ENCODE measurements at regions of chr6 and their contacts with region 1.

Region 1: GRCh38 chr6:25369433-25370181 is 90.4 kb downstream of the CARMIL1 start:
- DNase-seq: peak; percentile 7
- H3K4me3 Mint-ChIP-seq: peak overlapping the region; percentile 62
- H3K27ac Mint-ChIP-seq: peak overlapping the region; percentile 91
- H3K4me1 Mint-ChIP-seq: peaks cover 73% of the 10 kb centered on the region
- H3K27me3 Mint-ChIP-seq: no peaks in the 10 kb centered on the region

Region 2: GRCh38 chr6:25042036-25042521 is 327.5 kb before region 1 on chr6:
- intact Hi-C with region 1: loop called (anchors 5 kb)
- DNase-seq: peak; percentile 30
- H3K4me3 Mint-ChIP-seq: peak overlapping the region; percentile 88
- H3K27ac Mint-ChIP-seq: peak overlapping the region; percentile 95
- H3K4me1 Mint-ChIP-seq: peaks cover 66% of the 10 kb centered on the region
- H3K27me3 Mint-ChIP-seq: no peaks in the 10 kb centered on the region

Region 3: GRCh38 chr6:25179051-25179778 is 190.4 kb before region 1 on chr6:
- intact Hi-C with region 1: loop called (anchors 2 kb)
- DNase-seq: no peak
- H3K4me3 Mint-ChIP-seq: peak overlapping the region; percentile 70
- H3K27ac Mint-ChIP-seq: peak overlapping the region; percentile 93
- H3K4me1 Mint-ChIP-seq: peaks cover 90% of the 10 kb centered on the region
- H3K27me3 Mint-ChIP-seq: no peaks in the 10 kb centered on the region

Region 4: DNA sequence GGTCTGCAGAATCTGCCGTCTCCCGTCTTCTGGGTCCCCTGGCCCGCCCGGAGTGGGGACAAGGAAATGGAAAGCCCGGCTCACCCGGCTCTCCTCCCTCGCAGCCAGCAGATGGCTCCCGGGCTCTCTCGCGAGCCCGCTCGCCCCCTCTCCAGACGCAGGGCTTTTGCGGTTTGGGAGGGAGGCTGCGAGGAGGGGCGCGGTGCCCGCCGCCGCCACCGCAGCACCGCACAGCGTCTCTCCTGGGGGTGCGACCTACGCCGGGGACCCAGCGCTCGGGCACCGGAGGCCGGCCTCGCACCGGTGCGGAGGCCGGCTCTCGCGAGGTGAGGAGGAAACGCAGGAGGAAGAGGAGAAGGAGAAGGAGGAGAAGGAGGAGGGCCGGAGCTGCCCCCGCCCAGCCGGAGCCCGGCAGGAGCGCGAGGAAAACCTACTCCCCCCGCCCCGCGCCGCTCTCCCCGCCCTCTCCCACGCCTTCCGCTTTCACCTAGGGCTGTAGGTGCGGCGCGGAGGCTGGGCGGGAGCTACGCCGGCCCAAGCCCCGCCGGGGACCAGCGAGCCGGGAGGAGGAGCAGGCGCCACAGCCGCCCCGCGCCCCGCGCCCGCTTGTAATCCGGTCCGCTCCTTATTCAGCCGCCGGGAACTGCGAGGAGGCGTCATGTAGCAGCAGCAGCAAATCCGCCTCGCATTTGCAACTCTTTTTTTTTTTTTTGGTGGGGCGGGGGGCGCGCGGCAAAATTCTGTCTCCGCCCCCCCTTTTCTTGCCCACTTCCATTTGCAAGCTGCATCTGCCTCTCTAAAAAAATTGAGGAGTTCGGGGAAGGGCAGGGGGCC is 90.5 kb before region 1 on chr6 and contains the start of gene CARMIL1:
- intact Hi-C with region 1: loop called (anchors 1 kb)
- DNase-seq: peak; percentile 67
- H3K4me3 Mint-ChIP-seq: peak within 1 kb of the TSS; percentile 88
- H3K27ac Mint-ChIP-seq: peak within 1 kb of the TSS; percentile 79
- H3K4me1 Mint-ChIP-seq: peaks cover 30% of the 10 kb centered on the region
- H3K27me3 Mint-ChIP-seq: peaks cover 12% of the 10 kb centered on the region
- total RNA-seq, gene CARMIL1: 1.7 and 1.9 TPM in 2 replicates

Region 5: GRCh38 chr6:25404693-25405169 is 35.1 kb after region 1 on chr6:
- intact Hi-C with region 1: loop called (anchors 2 kb)
- DNase-seq: peak; percentile 3
- H3K4me3 Mint-ChIP-seq: peak overlapping the region; percentile 72
- H3K27ac Mint-ChIP-seq: peak overlapping the region; percentile 91
- H3K4me1 Mint-ChIP-seq: no peaks in the 10 kb centered on the region
- H3K27me3 Mint-ChIP-seq: peaks cover 2% of the 10 kb centered on the region

Region 6: GRCh38 chr6:25417046-25417605 is 47.5 kb after region 1 on chr6:
- intact Hi-C with region 1: no loop called
- DNase-seq: no peak
- H3K4me3 Mint-ChIP-seq: no peak overlapping the region
- H3K27ac Mint-ChIP-seq: no peak overlapping the region
- H3K4me1 Mint-ChIP-seq: peaks cover 16% of the 10 kb centered on the region
- H3K27me3 Mint-ChIP-seq: no peaks in the 10 kb centered on the region

Region 7: DNA sequence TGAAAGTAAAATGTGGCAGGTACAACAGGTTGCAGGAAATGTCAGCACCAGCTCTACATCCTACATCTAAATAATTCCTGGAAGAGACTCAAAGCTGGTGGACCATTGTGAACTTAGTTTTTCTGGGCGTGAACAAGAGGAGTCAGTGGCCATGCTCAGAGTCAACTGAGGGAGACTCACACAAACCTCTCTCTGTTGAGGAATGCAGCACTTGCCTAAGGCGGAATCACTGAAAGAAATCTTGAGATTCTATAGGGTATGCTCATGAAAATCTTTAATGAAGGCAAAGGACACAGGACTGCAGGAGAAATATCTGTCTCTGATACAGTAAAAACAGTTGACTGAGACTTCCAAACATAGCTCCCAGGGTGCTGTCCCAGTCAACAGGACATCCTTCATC is 407.4 kb after region 1 on chr6:
- intact Hi-C with region 1: loop called (anchors 5 kb)
- DNase-seq: no peak
- H3K4me3 Mint-ChIP-seq: no peak overlapping the region
- H3K27ac Mint-ChIP-seq: no peak overlapping the region
- H3K4me1 Mint-ChIP-seq: peaks cover 21% of the 10 kb centered on the region
- H3K27me3 Mint-ChIP-seq: peaks cover 2% of the 10 kb centered on the region